ENCODE measurements at regions of chr9 and their contacts with region 1.

Region 1: DNA sequence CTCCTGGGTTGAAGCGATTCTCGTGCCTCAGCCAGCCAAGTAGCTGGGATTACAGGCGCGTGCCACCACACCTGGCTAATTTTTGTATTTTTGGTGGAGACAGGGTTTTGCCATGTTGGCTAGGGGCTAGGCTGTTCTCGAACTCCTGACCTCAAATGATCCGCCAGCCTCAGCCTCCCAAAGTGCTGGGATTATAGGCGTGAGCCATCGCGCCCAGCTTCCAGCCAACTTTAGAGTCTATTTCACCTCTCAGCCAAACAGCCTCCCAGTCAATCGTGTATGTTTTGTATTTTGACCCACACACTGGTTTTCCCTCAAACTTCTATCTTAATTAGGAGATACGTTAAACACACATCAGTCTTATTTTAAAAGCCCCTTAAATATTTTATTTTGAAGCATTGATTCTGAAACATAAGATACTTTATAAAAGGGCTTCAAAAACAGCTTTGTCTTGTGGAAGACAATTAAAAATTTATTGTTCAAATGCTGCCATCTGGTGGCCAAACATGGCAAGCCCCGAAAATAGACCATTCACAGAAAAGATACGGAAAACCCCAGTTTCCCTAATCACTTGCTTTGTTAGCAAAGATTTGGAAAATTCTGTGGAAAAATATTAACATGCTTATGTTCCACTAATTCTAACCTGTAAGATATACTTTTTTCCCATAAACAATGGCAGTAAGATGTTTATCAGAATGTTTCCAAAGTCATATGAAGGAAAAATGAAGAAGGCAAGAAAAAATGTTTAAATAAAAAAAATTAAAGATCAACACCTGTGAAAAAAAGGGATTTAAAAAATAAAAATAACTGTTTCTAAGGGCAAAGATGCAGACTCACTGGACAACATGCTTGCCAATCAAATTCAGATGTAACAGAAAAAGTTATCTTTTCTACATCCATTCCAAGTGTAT is 33.1 kb downstream of the APTX start:
- DNase-seq: no peak
- H3K4me3 ChIP-seq: no peak overlapping the region
- H3K27ac ChIP-seq: no peak overlapping the region
- H3K4me1 ChIP-seq: peaks cover 0 to 5% (median 2%) of the 10 kb centered on the region in 4 donors
- H3K27me3 ChIP-seq: no peaks in the 10 kb centered on the region
- CTCF ChIP-seq: peak; percentile 76 to 85 (median 82)
- EP300 ChIP-seq: no peak
- POLR2A ChIP-seq: no peak

Region 2: GRCh38 chr9:32579706-32580331 is 388.5 kb before region 1 on chr9:
- intact Hi-C with region 1: loop called (anchors 5 kb)
- DNase-seq: no peak
- H3K4me3 ChIP-seq: no peak overlapping the region
- H3K27ac ChIP-seq: no peak overlapping the region
- H3K4me1 ChIP-seq: peaks cover 0 to 8% (median 4%) of the 10 kb centered on the region in 4 donors
- H3K27me3 ChIP-seq: peaks cover 0 to 3% (median 0%) of the 10 kb centered on the region in 4 donors
- CTCF ChIP-seq: peak; percentile 86 to 90 (median 89)
- EP300 ChIP-seq: no peak
- POLR2A ChIP-seq: no peak